Activated naive CD4-positive, alpha-beta T cell treated with anti-CD3 and anti-CD28 coated beads for 36 hours (primary cell): ENCODE measurements at regions of chr5 and their contacts with region 1.

Region 1: GRCh38 chr5:134904630-134905245 is at the start of gene PCBD2:
- DNase-seq: peak; percentile 95
- H3K4me3 Mint-ChIP-seq: peak within 1 kb of the TSS; percentile 98
- H3K27ac Mint-ChIP-seq: peak within 1 kb of the TSS; percentile 99
- H3K4me1 Mint-ChIP-seq: peaks cover 17% of the 10 kb centered on the region
- H3K27me3 Mint-ChIP-seq: no peaks in the 10 kb centered on the region
- total RNA-seq, gene PCBD2: 9.6 to 10.5 TPM

Region 2: GRCh38 chr5:134304311-134304710 is 600.4 kb before region 1 on chr5:
- CTCF ChIA-PET with region 1: no interaction called
- intact Hi-C with region 1: loop called (anchors 1 kb)
- DNase-seq: no peak
- H3K4me3 Mint-ChIP-seq: no peak overlapping the region
- H3K27ac Mint-ChIP-seq: no peak overlapping the region
- H3K4me1 Mint-ChIP-seq: peaks cover 6% of the 10 kb centered on the region
- H3K27me3 Mint-ChIP-seq: no peaks in the 10 kb centered on the region

Region 3: DNA sequence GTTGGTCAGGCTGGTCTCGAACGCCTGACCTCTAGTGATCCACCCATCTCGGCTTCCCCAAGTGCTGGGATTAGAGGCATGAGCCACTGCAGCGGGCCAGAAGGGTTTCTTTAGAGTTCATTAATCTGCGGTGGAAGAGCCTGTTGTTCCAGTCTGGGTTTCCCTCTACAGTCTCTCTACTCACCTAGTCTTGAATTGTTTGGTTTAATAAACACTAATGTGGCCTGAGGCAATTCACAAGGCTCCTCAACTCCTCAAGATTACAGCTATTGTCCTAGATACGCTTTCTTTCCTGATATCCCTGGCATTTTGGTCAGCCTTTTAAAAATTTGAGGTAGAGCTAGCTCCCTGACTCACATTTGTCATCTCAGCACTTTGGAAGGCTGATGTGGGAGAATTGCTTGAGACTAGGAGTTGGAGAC is 267.6 kb before region 1 on chr5:
- CTCF ChIA-PET with region 1: no interaction called
- intact Hi-C with region 1: loop called (anchors 2 kb)
- DNase-seq: no peak
- H3K4me3 Mint-ChIP-seq: no peak overlapping the region
- H3K27ac Mint-ChIP-seq: no peak overlapping the region
- H3K4me1 Mint-ChIP-seq: peaks cover 7% of the 10 kb centered on the region
- H3K27me3 Mint-ChIP-seq: no peaks in the 10 kb centered on the region

Region 4: GRCh38 chr5:134784241-134784920 is 120.4 kb before region 1 on chr5:
- CTCF ChIA-PET with region 1: interaction called, 5 read pairs
- intact Hi-C with region 1: loop called (anchors 1 kb)
- DNase-seq: no peak
- H3K4me3 Mint-ChIP-seq: no peak overlapping the region
- H3K27ac Mint-ChIP-seq: no peak overlapping the region
- H3K4me1 Mint-ChIP-seq: no peaks in the 10 kb centered on the region
- H3K27me3 Mint-ChIP-seq: no peaks in the 10 kb centered on the region

Region 5: GRCh38 chr5:134873987-134874830 is 30.5 kb before region 1 on chr5 and contains the start of gene TXNDC15:
- CTCF ChIA-PET with region 1: interaction called, 16 read pairs
- intact Hi-C with region 1: loop called (anchors 1 kb)
- DNase-seq: peak; percentile 84
- H3K4me3 Mint-ChIP-seq: peak within 1 kb of the TSS; percentile 89
- H3K27ac Mint-ChIP-seq: peak within 1 kb of the TSS; percentile 92
- H3K4me1 Mint-ChIP-seq: peaks cover 30% of the 10 kb centered on the region
- H3K27me3 Mint-ChIP-seq: no peaks in the 10 kb centered on the region
- total RNA-seq, gene TXNDC15: 19.8 to 20.9 TPM

Region 6: GRCh38 chr5:134958765-134959168 is 54.0 kb after region 1 on chr5:
- CTCF ChIA-PET with region 1: no interaction called
- intact Hi-C with region 1: no loop called
- DNase-seq: no peak
- H3K4me3 Mint-ChIP-seq: no peak overlapping the region
- H3K27ac Mint-ChIP-seq: no peak overlapping the region
- H3K4me1 Mint-ChIP-seq: peaks cover 7% of the 10 kb centered on the region
- H3K27me3 Mint-ChIP-seq: no peaks in the 10 kb centered on the region